WTC11 (cell line): ENCODE measurements at regions of chr12 and their contacts with region 1.

Region 1: GRCh38 chr12:14769969-14770495 is 33.2 kb downstream of the WBP11 start:
- DNase-seq: peak; percentile 89
- ATAC-seq: peak; percentile 17
- H3K4me3 Mint-ChIP-seq: peak overlapping the region; percentile 99
- H3K27ac Mint-ChIP-seq: peak overlapping the region; percentile 100
- H3K4me1 Mint-ChIP-seq: peaks cover 40% of the 10 kb centered on the region
- H3K27me3 Mint-ChIP-seq: no peaks in the 10 kb centered on the region; the same call in 1 of the 2 replicates
- CTCF ChIP-seq: peak; percentile 50

Region 2: DNA sequence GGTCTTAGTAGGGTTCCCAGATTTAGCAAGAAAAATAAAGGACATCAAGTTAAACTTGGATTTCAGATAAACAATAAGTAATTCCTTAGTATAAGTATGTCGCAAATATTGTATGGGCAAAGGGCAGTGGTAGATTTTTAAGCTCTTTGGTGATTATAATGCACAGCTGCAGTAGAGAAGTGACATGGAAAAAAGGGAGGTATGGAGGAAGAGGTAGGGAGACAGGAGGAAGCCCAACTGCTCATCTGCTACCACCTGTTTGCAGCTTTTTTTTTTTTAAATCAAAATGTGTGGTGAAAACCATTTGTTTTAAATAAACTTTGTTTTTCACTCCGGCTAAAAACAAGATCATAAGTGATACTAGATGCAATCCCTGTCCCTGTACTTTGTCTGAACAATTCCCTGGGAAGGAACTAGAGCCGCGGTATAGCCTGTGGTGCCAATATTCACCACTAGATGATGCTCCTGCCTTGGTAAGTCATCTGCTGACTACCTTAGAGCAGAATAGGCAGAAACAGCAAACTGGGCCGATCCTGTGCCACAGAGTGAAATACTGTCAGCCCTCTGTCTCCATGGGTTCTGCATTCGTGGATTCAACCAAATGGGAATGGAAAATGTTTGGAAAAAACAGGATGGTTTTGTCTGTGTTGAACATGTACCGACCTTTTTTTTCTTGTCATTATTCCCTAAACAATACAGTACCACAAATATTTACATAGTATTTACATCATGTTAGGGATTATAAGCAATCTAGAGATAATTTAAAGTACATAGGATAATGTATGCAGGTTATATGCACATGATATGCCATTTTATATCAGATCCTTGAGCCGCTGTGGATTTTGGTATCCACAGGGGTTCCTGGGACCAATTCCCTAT is 140.0 kb before region 1 on chr12:
- CTCF ChIA-PET with region 1: no interaction called
- POLR2A ChIA-PET with region 1: no interaction called
- DNase-seq: peak; percentile 82
- ATAC-seq: peak; percentile 100
- H3K4me3 Mint-ChIP-seq: no peak overlapping the region
- H3K27ac Mint-ChIP-seq: 0 out of 2 replicates have a peak overlapping the region, but pooled peaks have one; percentile 30
- H3K4me1 Mint-ChIP-seq: peaks cover 19% of the 10 kb centered on the region
- H3K27me3 Mint-ChIP-seq: no peaks in the 10 kb centered on the region
- CTCF ChIP-seq: peak; percentile 93

Region 3: GRCh38 chr12:14723763-14724162 is 46.3 kb before region 1 on chr12:
- CTCF ChIA-PET with region 1: interaction called, 17 read pairs
- POLR2A ChIA-PET with region 1: interaction called, 5 read pairs
- DNase-seq: peak; percentile 57
- ATAC-seq: peak; percentile 99
- H3K4me3 Mint-ChIP-seq: no peak overlapping the region
- H3K27ac Mint-ChIP-seq: no peak overlapping the region
- H3K4me1 Mint-ChIP-seq: no peaks in the 10 kb centered on the region; the same call in 1 of the 2 replicates
- H3K27me3 Mint-ChIP-seq: no peaks in the 10 kb centered on the region
- CTCF ChIP-seq: peak; percentile 60

Region 4: DNA sequence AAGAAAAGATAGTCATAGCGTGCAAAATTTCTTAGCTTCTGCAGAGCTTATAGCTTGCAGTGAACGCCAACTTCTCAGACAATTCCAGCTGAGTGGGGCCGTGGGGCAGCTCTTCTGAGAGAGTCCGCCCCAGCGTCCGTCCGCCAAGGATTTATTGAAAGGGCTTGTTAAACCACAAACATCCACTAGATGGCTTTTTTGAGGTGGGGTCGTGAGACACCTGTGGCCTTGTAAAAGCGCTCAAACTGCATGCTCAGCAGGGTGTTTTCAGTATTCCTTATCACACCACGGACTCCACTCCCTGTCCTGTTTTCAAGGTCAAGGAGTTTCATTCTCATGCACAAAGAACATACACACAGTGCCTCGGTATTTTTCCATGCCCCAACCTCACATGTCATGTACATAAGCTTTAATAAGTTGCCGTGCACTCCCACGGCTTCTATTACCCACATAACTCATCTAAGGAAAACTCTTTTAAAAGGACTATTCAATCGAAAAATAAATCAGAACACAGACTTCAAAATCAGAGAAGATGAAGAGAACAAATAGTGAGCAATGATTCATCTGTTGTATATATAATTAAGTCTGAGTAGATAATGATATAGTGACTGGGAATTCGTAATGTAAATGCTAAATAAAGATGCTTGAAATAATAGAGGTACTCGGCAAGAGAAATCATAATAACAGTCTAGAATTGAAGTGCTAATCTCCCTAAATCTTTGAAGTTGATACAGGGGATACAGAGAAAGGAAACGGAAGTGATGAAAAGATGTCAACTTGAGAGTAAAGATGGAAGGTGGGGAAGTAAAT is 13.5 kb before region 1 on chr12:
- CTCF ChIA-PET with region 1: interaction called, 21 read pairs
- POLR2A ChIA-PET with region 1: interaction called, 4 read pairs
- DNase-seq: peak; percentile 64
- ATAC-seq: peak; percentile 75
- H3K4me3 Mint-ChIP-seq: no peak overlapping the region
- H3K27ac Mint-ChIP-seq: no peak overlapping the region
- H3K4me1 Mint-ChIP-seq: peaks cover 16% of the 10 kb centered on the region
- H3K27me3 Mint-ChIP-seq: no peaks in the 10 kb centered on the region
- CTCF ChIP-seq: peak; percentile 62

Region 5: GRCh38 chr12:14803011-14803829 is 33.2 kb after region 1 on chr12 and contains the starts of genes C12orf60 and WBP11:
- CTCF ChIA-PET with region 1: interaction called, 8 read pairs
- POLR2A ChIA-PET with region 1: interaction called, 23 read pairs
- DNase-seq: peak; percentile 87
- ATAC-seq: peak; percentile 99
- H3K4me3 Mint-ChIP-seq: no peak within 1 kb of the TSS
- H3K27ac Mint-ChIP-seq: no peak within 1 kb of the TSS; the same call in 1 of the 2 replicates
- H3K4me1 Mint-ChIP-seq: peaks cover 17% of the 10 kb centered on the region
- H3K27me3 Mint-ChIP-seq: no peaks in the 10 kb centered on the region
- CTCF ChIP-seq: no peak
- total RNA-seq, gene C12orf60: 1.3 to 2.0 TPM (median 1.8 TPM) in 3 replicates
- total RNA-seq, gene WBP11: 98.4 to 111 TPM (median 102 TPM) in 3 replicates

Region 6: GRCh38 chr12:15393037-15393436 is 623.0 kb after region 1 on chr12:
- CTCF ChIA-PET with region 1: no interaction called
- POLR2A ChIA-PET with region 1: no interaction called
- DNase-seq: no peak
- ATAC-seq: no peak
- H3K4me3 Mint-ChIP-seq: no peak overlapping the region
- H3K27ac Mint-ChIP-seq: no peak overlapping the region
- H3K4me1 Mint-ChIP-seq: peaks cover 8% of the 10 kb centered on the region
- H3K27me3 Mint-ChIP-seq: no peaks in the 10 kb centered on the region
- CTCF ChIP-seq: no peak